Endothelial cell of umbilical vein (primary cell): ENCODE measurements at regions of chr14 and their contacts with region 1.

Region 1: GRCh38 chr14:21476925-21477681 is at the starts of genes RAB2B and TOX4:
- DNase-seq: peak; percentile 99
- H3K4me3 ChIP-seq: peak within 1 kb of the TSS; percentile 69 to 95 (median 93)
- H3K27ac ChIP-seq: peak within 1 kb of the TSS; percentile 97
- H3K4me1 ChIP-seq: peaks cover 20% of the 10 kb centered on the region
- H3K27me3 ChIP-seq: no peaks in the 10 kb centered on the region
- CTCF ChIP-seq: peak; percentile 91 to 99
- POLR2A ChIP-seq: peak; percentile 15
- total RNA-seq, gene RAB2B: 29.1 and 30.6 TPM in 2 replicates
- total RNA-seq, gene TOX4: 63.2 and 67.4 TPM in 2 replicates

Region 2: GRCh38 chr14:21269252-21270046 is 207.7 kb before region 1 on chr14 and contains the start of gene HNRNPC:
- CTCF ChIA-PET with region 1: no interaction called
- POLR2A ChIA-PET with region 1: interaction called, 4 read pairs
- dilution Hi-C with region 1: no loop called
- intact Hi-C with region 1: loop called (anchors 1 kb)
- DNase-seq: peak; percentile 100
- H3K4me3 ChIP-seq: peak within 1 kb of the TSS; percentile 78 to 99 (median 96)
- H3K27ac ChIP-seq: peak within 1 kb of the TSS; percentile 97
- H3K4me1 ChIP-seq: peaks cover 28% of the 10 kb centered on the region
- H3K27me3 ChIP-seq: no peaks in the 10 kb centered on the region
- CTCF ChIP-seq: no peak
- POLR2A ChIP-seq: peak; percentile 89
- total RNA-seq, gene HNRNPC: 611 and 674 TPM in 2 replicates

Region 3: DNA sequence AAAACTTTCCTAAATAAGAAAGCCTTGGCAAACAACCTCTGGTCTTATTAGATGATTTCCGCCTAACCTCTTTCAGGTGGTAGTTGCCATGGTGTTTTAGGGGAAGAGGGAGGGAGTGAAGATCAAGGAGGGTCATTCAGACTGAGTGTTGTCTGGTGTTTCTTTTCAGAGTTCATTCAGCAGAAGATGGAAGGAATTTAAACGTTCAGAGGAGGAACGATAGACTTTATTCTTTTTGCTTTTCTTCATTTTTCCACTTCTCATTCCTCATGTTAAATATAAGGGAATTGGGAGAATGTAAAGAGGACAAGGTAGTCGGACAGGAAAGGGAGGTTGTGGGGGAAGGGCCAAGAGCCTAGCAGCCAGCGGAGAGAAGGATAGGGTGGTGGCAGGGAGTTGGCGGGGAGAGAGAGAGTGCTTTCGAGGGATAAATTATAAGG is 66.4 kb after region 1 on chr14:
- CTCF ChIA-PET with region 1: no interaction called
- POLR2A ChIA-PET with region 1: no interaction called
- dilution Hi-C with region 1: no loop called
- intact Hi-C with region 1: no loop called
- DNase-seq: no peak
- H3K4me3 ChIP-seq: no peak overlapping the region
- H3K27ac ChIP-seq: no peak overlapping the region
- H3K4me1 ChIP-seq: no peaks in the 10 kb centered on the region
- H3K27me3 ChIP-seq: peaks cover 9 to 19% of the 10 kb centered on the region in 2 experiments
- CTCF ChIP-seq: no peak
- POLR2A ChIP-seq: no peak

Region 4: DNA sequence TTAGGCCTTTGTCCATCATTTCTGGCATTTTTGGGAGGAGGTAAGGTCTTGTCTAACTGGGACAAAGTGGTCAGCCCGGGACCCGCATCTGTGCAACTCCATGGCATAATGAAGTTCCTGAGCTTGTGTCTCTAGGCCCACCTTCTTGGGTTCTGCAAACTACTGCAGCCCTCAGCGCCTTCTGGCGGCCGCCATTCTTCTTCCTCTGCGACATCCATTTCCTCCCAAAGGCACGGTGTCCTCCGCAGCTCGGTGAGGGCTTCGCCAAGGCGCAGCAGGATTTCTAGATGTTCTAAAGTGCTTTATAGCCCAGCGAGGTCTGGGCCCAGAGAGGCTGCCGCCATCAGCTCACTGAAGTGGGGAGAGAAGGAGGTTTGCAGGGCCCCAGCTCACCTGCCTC is 330.9 kb after region 1 on chr14:
- CTCF ChIA-PET with region 1: no interaction called
- POLR2A ChIA-PET with region 1: no interaction called
- dilution Hi-C with region 1: no loop called
- intact Hi-C with region 1: no loop called
- DNase-seq: no peak
- H3K4me3 ChIP-seq: no peak overlapping the region
- H3K27ac ChIP-seq: no peak overlapping the region
- H3K4me1 ChIP-seq: no peaks in the 10 kb centered on the region
- H3K27me3 ChIP-seq: peaks cover 2 to 5% of the 10 kb centered on the region in 2 experiments
- CTCF ChIP-seq: no peak
- POLR2A ChIP-seq: no peak